ENCODE measurements at regions of chr7 and their contacts with region 1.

Region 1: GRCh38 chr7:65981965-65982792 is at the start of gene GUSB:
- DNase-seq: peak; percentile 91
- ATAC-seq: peak; percentile 95
- H3K4me3 ChIP-seq: peak within 1 kb of the TSS; percentile 15 to 89 (median 85)
- H3K4me3 Mint-ChIP-seq: peak within 1 kb of the TSS; percentile 87
- H3K27ac ChIP-seq: peak within 1 kb of the TSS; percentile 34 to 73
- H3K27ac Mint-ChIP-seq: peak within 1 kb of the TSS; percentile 84
- H3K4me1 ChIP-seq: peaks cover 14 to 26% of the 10 kb centered on the region in 2 donors
- H3K4me1 Mint-ChIP-seq: peaks cover 19% of the 10 kb centered on the region
- H3K27me3 ChIP-seq: no peaks in the 10 kb centered on the region
- H3K27me3 Mint-ChIP-seq: no peaks in the 10 kb centered on the region
- CTCF ChIP-seq: no peak
- total RNA-seq, gene GUSB: 65.4 and 66.4 TPM in 2 replicates

Region 2: GRCh38 chr7:65750511-65751344 is 231.5 kb before region 1 on chr7:
- CTCF ChIA-PET with region 1: no interaction called
- POLR2A ChIA-PET with region 1: no interaction called
- intact Hi-C with region 1: loop called (anchors 2 kb)
- DNase-seq: peak; percentile 89
- ATAC-seq: peak; percentile 99
- H3K4me3 ChIP-seq: peak overlapping the region; percentile 43 to 88 (median 75)
- H3K4me3 Mint-ChIP-seq: peak overlapping the region; percentile 97
- H3K27ac ChIP-seq: peak overlapping the region; percentile 41 to 69
- H3K27ac Mint-ChIP-seq: peak overlapping the region; percentile 86
- H3K4me1 ChIP-seq: peaks cover 3 to 15% of the 10 kb centered on the region in 2 donors
- H3K4me1 Mint-ChIP-seq: peaks cover 16% of the 10 kb centered on the region
- H3K27me3 ChIP-seq: no peaks in the 10 kb centered on the region
- H3K27me3 Mint-ChIP-seq: no peaks in the 10 kb centered on the region
- CTCF ChIP-seq: no peak

Region 3: DNA sequence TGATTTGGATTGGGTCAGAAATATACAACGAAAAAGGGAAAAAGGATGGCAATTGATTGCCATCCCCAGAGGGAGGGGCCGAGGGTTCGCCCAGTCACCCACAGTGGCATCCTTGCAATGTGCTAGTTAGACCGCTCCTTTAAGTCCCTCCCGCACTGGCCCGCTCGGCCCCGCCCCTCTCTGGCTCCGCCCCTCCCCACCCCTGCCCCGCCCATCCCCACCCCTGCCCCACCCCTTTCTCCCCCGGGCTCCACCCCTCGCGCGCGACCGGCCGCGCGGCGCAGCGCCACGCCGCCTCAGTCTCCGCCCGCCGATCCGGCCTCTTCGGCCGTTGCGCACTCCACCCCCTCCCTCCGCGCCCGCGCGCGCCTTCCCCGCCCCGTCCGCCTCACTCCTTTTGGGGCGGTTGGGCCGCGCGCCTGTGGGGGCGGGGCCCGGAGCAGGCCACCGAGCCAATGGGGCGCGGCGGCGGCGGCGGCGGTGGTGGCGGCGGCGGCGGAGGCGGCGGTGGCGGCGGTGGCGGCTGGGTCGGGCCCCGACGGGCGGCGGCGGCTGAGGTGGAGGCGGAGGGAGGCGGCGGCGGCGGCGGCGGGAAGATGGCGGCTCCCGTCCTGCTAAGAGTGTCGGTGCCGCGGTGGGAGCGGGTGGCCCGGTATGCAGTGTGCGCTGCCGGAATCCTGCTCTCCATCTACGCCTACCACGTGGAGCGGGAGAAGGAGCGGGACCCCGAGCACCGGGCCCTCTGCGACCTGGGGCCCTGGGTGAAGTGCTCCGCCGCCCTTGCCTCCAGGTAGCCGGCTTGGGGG is 109.2 kb before region 1 on chr7 and contains the start of gene VKORC1L1:
- CTCF ChIA-PET with region 1: no interaction called
- POLR2A ChIA-PET with region 1: interaction called, 3 read pairs
- intact Hi-C with region 1: loop called (anchors 1 kb)
- DNase-seq: peak; percentile 96
- ATAC-seq: peak; percentile 93
- H3K4me3 ChIP-seq: peak within 1 kb of the TSS in 4 of 5 experiments; percentile 68 to 78 (median 68)
- H3K4me3 Mint-ChIP-seq: peak within 1 kb of the TSS; percentile 87
- H3K27ac ChIP-seq: peak within 1 kb of the TSS; percentile 54 to 71
- H3K27ac Mint-ChIP-seq: peak within 1 kb of the TSS; percentile 68
- H3K4me1 ChIP-seq: peaks cover 5 to 9% of the 10 kb centered on the region in 2 donors
- H3K4me1 Mint-ChIP-seq: peaks cover 8% of the 10 kb centered on the region
- H3K27me3 ChIP-seq: no peaks in the 10 kb centered on the region
- H3K27me3 Mint-ChIP-seq: no peaks in the 10 kb centered on the region
- CTCF ChIP-seq: no peak
- total RNA-seq, gene VKORC1L1: 8.1 and 10.1 TPM in 2 replicates

Region 4: GRCh38 chr7:66007232-66007631 is 25.1 kb after region 1 on chr7:
- CTCF ChIA-PET with region 1: no interaction called
- POLR2A ChIA-PET with region 1: no interaction called
- intact Hi-C with region 1: no loop called
- DNase-seq: no peak
- ATAC-seq: no peak
- H3K4me3 ChIP-seq: no peak overlapping the region
- H3K4me3 Mint-ChIP-seq: no peak overlapping the region
- H3K27ac ChIP-seq: no peak overlapping the region
- H3K27ac Mint-ChIP-seq: no peak overlapping the region
- H3K4me1 ChIP-seq: no peaks in the 10 kb centered on the region
- H3K4me1 Mint-ChIP-seq: no peaks in the 10 kb centered on the region
- H3K27me3 ChIP-seq: peaks cover 0 to 4% (median 0%) of the 10 kb centered on the region in 4 experiments
- H3K27me3 Mint-ChIP-seq: no peaks in the 10 kb centered on the region
- CTCF ChIP-seq: no peak

Region 5: DNA sequence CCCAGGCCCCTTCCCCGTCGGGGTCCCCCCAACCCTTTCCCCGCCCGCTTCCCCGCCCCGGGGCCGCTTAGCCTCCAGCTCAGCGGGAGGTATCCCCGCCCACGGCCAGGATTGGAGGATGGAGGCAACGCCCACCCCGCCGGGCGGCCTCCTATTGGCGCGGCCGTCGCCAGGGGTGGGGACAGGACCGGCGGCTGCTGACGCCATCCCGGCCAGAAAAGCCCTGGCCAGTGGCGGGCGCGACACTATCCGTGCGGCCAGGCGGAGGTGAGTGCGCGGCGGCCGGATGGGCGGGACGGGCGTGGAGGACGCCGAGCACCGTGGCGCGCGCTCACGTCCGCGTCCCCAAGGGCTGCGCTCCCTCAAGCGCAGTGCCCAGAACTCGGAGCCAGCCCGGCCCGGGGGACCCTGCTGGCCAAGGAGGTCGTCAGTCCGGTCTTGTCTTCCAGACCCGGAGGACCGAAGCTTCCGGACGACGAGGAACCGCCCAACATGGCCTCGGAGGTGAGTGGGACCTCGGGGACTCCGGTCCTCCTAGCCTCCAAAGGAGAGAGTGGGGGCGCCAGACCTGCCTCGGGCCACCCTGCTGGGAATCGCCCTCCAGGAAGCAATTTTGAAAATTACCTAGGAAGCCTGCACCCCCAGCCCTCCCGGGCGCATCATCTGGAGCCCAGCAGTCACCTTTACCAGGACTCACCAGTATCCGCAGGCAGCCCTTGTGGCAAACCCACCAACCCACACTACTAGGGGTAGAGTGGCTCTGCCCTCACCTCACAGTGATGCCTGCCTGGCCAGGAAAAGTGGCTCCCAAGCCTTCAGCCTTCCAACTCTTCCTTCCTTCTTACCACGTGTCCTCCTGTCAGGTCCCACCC is 93.6 kb after region 1 on chr7 and contains the start of gene ASL:
- CTCF ChIA-PET with region 1: no interaction called
- POLR2A ChIA-PET with region 1: interaction called, 3 read pairs
- intact Hi-C with region 1: loop called (anchors 2 kb)
- DNase-seq: peak; percentile 90
- ATAC-seq: peak; percentile 98
- H3K4me3 ChIP-seq: peak within 1 kb of the TSS; percentile 54 to 93 (median 77)
- H3K4me3 Mint-ChIP-seq: peak within 1 kb of the TSS; percentile 90
- H3K27ac ChIP-seq: peak within 1 kb of the TSS; percentile 55 to 82
- H3K27ac Mint-ChIP-seq: peak within 1 kb of the TSS; percentile 76
- H3K4me1 ChIP-seq: peaks cover 6 to 18% of the 10 kb centered on the region in 2 donors
- H3K4me1 Mint-ChIP-seq: peaks cover 17% of the 10 kb centered on the region
- H3K27me3 ChIP-seq: no peaks in the 10 kb centered on the region
- H3K27me3 Mint-ChIP-seq: no peaks in the 10 kb centered on the region
- CTCF ChIP-seq: no peak
- total RNA-seq, gene ASL: 48.7 and 48.8 TPM in 2 replicates

Region 6: DNA sequence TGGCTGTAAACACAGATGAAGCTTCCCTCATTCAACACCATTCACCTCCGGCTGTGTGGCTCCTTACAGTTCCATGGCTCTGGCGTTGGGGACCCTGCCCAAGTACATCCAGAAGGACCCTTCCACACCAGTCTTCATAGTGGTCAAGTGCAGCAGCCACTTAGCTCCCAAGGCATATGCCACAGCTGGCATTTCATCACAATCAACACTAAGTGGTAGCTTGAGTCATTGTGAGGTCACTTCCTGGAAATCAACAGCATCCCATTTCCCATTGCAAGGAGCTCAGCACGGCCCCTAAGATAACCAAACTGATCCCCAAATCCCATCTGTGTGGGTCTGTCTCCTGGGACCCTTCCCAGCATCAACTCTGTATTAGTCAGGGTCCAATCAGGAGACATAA is 397.6 kb after region 1 on chr7:
- CTCF ChIA-PET with region 1: no interaction called
- POLR2A ChIA-PET with region 1: no interaction called
- intact Hi-C with region 1: no loop called
- DNase-seq: no peak
- ATAC-seq: no peak
- H3K4me3 ChIP-seq: no peak overlapping the region
- H3K4me3 Mint-ChIP-seq: no peak overlapping the region
- H3K27ac ChIP-seq: no peak overlapping the region
- H3K27ac Mint-ChIP-seq: no peak overlapping the region
- H3K4me1 ChIP-seq: no peaks in the 10 kb centered on the region
- H3K4me1 Mint-ChIP-seq: no peaks in the 10 kb centered on the region
- H3K27me3 ChIP-seq: no peaks in the 10 kb centered on the region
- H3K27me3 Mint-ChIP-seq: no peaks in the 10 kb centered on the region
- CTCF ChIP-seq: no peak

Region 7: DNA sequence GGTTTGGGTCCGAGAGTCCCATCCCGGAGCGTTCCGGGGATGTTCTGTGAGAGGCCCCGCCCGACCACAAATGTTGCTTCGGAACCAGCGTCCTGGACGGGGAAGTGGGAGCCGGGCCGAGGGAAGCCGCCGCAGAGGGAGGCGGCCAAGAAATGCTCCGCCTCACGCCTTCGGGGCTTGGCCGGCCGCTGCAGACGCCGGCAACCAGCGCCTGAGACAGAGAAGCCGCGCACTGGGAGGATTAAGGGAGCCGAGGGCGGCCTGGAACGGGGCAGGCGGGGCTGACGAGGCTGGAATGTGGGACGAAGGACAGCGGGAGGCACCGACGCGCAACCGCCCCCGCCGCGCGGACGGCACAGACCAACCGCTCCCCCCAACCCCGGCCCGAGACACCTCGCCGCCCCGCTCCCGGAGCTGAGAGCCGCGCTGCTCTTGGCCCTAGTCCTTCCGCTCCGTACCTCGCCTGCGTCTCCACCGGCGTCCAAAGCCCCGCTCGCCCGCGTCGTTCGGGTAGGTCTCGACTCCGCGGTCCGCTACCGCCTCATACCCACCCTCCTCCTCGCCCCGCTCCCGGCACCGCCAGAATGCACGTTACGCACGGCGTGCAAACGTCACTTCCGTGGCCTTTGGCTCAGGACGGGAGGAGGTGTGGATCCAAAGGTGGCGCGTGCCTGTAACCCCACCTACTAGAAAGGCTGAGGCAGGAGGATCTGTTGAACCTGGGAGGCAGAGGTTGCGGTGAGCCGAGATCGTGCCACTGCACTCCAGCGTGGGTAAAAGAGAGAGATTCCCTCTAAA is 609.8 kb after region 1 on chr7:
- CTCF ChIA-PET with region 1: no interaction called
- POLR2A ChIA-PET with region 1: no interaction called
- intact Hi-C with region 1: loop called (anchors 5 kb)
- DNase-seq: peak; percentile 90
- ATAC-seq: peak; percentile 98
- H3K4me3 ChIP-seq: peak overlapping the region; percentile 47 to 94 (median 81)
- H3K4me3 Mint-ChIP-seq: peak overlapping the region; percentile 100
- H3K27ac ChIP-seq: peak overlapping the region; percentile 42 to 87
- H3K27ac Mint-ChIP-seq: peak overlapping the region; percentile 99
- H3K4me1 ChIP-seq: peaks cover 13 to 27% of the 10 kb centered on the region in 2 donors
- H3K4me1 Mint-ChIP-seq: peaks cover 47% of the 10 kb centered on the region
- H3K27me3 ChIP-seq: no peaks in the 10 kb centered on the region
- H3K27me3 Mint-ChIP-seq: no peaks in the 10 kb centered on the region
- CTCF ChIP-seq: no peak

Region 8: DNA sequence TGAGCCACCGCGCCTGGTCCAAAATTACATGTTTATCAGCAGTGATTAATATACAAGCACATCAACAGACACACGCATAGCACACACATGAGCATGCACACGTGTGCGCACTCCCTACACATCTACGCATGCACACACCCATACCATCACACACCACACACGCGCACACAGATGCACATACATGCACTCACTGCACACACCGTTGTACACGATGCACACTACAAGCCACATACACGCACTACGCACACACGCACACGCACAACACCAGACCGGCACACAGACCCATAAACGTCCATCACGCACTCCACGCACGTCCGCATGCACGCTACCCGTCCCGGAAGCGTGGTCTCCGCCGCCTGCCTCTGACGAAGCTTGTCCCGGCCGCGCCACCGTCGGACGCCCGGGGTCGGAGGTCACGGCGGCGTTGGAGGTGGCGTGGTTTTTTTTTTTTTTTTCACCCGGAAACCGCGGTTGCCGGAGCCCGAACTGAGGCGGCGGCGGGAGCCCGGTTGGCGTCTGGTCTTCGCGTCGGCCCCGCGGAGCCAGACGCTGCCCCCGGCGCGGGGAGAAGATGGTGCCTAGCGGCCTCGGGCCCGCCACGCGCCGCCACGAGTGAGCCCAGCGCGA is 938.7 kb after region 1 on chr7 and contains the start of gene TMEM248:
- CTCF ChIA-PET with region 1: no interaction called
- POLR2A ChIA-PET with region 1: no interaction called
- intact Hi-C with region 1: loop called (anchors 5 kb)
- DNase-seq: peak; percentile 94
- ATAC-seq: peak; percentile 93
- H3K4me3 ChIP-seq: peak within 1 kb of the TSS; percentile 63 to 98 (median 96)
- H3K4me3 Mint-ChIP-seq: peak within 1 kb of the TSS; percentile 100
- H3K27ac ChIP-seq: peak within 1 kb of the TSS; percentile 52 to 95
- H3K27ac Mint-ChIP-seq: peak within 1 kb of the TSS; percentile 100
- H3K4me1 ChIP-seq: peaks cover 20 to 32% of the 10 kb centered on the region in 2 donors
- H3K4me1 Mint-ChIP-seq: peaks cover 37% of the 10 kb centered on the region
- H3K27me3 ChIP-seq: no peaks in the 10 kb centered on the region
- H3K27me3 Mint-ChIP-seq: no peaks in the 10 kb centered on the region
- CTCF ChIP-seq: no peak
- total RNA-seq, gene TMEM248: 114 and 120 TPM in 2 replicates